ENCODE measurements at regions of chr9 and their contacts with region 1.

Region 1: GRCh38 chr9:115333277-115334070 is 215.5 kb upstream of the TNC start:
- DNase-seq: no peak
- H3K4me3 ChIP-seq: no peak overlapping the region
- H3K27ac ChIP-seq: no peak overlapping the region
- H3K4me1 ChIP-seq: no peaks in the 10 kb centered on the region
- H3K27me3 ChIP-seq: no peaks in the 10 kb centered on the region
- CTCF ChIP-seq: no peak
- EP300 ChIP-seq: no peak
- POLR2A ChIP-seq: no peak
- RAD21 ChIP-seq: no peak

Region 2: GRCh38 chr9:115098226-115098965 is 235.1 kb before region 1 on chr9:
- CTCF ChIA-PET with region 1: no interaction called
- POLR2A ChIA-PET with region 1: no interaction called
- DNase-seq: no peak
- H3K4me3 ChIP-seq: no peak overlapping the region
- H3K27ac ChIP-seq: no peak overlapping the region
- H3K4me1 ChIP-seq: peaks cover 0 to 2% (median under 1%) of the 10 kb centered on the region in 4 experiments; a peak in 2 of 7 replicates
- H3K27me3 ChIP-seq: peaks cover 0 to 3% (median 0%) of the 10 kb centered on the region in 4 experiments; a peak in 1 of 7 replicates
- CTCF ChIP-seq: no peak
- EP300 ChIP-seq: no peak
- POLR2A ChIP-seq: no peak
- RAD21 ChIP-seq: no peak

Region 3: GRCh38 chr9:115349526-115349925 is 16.1 kb after region 1 on chr9:
- CTCF ChIA-PET with region 1: interaction called, 10 read pairs
- POLR2A ChIA-PET with region 1: interaction called, 3 read pairs
- DNase-seq: no peak
- H3K4me3 ChIP-seq: no peak overlapping the region
- H3K27ac ChIP-seq: no peak overlapping the region
- H3K4me1 ChIP-seq: no peaks in the 10 kb centered on the region
- H3K27me3 ChIP-seq: no peaks in the 10 kb centered on the region
- CTCF ChIP-seq: no peak
- EP300 ChIP-seq: no peak
- POLR2A ChIP-seq: no peak
- RAD21 ChIP-seq: no peak

Region 4: DNA sequence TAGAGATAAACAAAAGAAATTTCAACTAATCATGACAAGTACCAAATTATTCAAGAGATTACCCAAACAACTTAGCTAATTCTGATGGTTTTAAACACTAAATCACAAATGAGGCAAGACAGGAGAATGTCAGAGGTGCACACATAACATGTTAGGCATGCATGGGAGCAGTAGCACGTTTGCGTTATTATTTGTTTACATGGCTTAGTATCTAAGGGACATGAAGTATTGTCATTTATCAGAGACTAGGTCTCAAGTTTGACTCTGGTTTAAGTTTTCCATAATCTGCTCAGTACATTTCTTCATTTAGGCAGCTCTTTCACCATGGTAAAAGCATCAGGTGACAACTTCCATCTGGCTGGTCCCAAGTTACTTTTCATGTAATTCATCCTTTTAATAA is 28.6 kb after region 1 on chr9:
- CTCF ChIA-PET with region 1: no interaction called
- POLR2A ChIA-PET with region 1: no interaction called
- DNase-seq: no peak
- H3K4me3 ChIP-seq: no peak overlapping the region
- H3K27ac ChIP-seq: no peak overlapping the region
- H3K4me1 ChIP-seq: no peaks in the 10 kb centered on the region
- H3K27me3 ChIP-seq: no peaks in the 10 kb centered on the region
- CTCF ChIP-seq: no peak
- EP300 ChIP-seq: no peak
- POLR2A ChIP-seq: no peak
- RAD21 ChIP-seq: no peak